ENCODE measurements at regions of chr16 and their contacts with region 1.

Region 1: DNA sequence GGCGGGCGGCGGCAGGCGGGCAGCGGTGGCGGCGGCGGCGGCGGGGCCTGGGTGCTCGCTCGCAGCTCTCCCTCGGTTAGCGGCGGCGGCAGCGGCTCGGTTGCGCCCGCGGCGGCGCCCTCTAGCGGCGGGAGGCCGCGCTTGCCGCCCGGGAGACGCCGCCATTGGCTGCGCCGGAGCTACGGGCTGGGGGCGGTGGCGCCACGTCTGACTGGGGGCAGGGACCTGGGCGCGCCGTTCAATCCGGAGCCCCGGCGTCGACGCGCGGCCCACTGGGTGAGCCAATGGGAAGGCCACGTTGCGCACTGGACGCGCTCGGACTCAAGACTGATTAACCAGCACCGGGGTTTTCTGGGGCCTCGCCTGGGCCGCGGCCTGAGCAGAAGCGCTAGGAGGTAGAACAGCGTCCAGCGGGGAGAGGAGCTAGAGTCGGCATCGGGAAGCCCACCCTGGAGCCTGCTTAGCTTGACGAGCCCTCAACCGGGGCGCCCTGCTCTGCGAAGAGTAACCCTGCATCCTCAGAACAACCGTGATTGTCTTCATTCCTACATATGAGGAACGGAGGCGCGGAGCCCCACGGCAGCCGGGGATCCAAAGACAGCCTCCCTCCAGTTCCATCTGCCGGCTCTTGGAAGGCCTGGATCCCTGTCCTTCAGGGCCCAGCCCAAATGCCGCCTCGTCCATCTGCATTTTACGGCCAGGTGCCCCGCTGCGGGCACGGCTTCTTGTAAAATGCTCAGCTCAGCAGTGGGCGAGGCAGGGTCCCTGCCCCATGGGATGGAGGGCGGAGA is at the start of gene ZC3H7A:
- DNase-seq: peak; percentile 97
- H3K4me3 ChIP-seq: peak within 1 kb of the TSS; percentile 70
- H3K27ac ChIP-seq: peak within 1 kb of the TSS; percentile 97
- H3K4me1 ChIP-seq: peaks cover 17% of the 10 kb centered on the region
- H3K27me3 ChIP-seq: no peaks in the 10 kb centered on the region
- CTCF ChIP-seq: peak; percentile 77
- total RNA-seq, gene ZC3H7A: 40.2 to 47.1 TPM

Region 2: GRCh38 chr16:11742539-11743307 is 54.6 kb before region 1 on chr16 and contains the start of gene TXNDC11:
- intact Hi-C with region 1: loop called (anchors 10 kb)
- DNase-seq: peak; percentile 100
- H3K4me3 ChIP-seq: peak within 1 kb of the TSS; percentile 77
- H3K27ac ChIP-seq: peak within 1 kb of the TSS; percentile 97
- H3K4me1 ChIP-seq: no peaks in the 10 kb centered on the region
- H3K27me3 ChIP-seq: no peaks in the 10 kb centered on the region
- CTCF ChIP-seq: no peak
- total RNA-seq, gene TXNDC11: 52.0 to 62.1 TPM